ENCODE measurements at regions of chr3 and their contacts with region 1.

Region 1: GRCh38 chr3:185070491-185071286 is 82.2 kb downstream of the C3orf70 start:
- DNase-seq: peak; percentile 21
- H3K4me3 ChIP-seq: no peak overlapping the region
- H3K27ac ChIP-seq: no peak overlapping the region
- H3K4me1 ChIP-seq: no peaks in the 10 kb centered on the region
- H3K27me3 ChIP-seq: no peaks in the 10 kb centered on the region
- CTCF ChIP-seq: peak in 1 of 2 donors; percentile 38

Region 2: GRCh38 chr3:185131602-185132256 is 61.0 kb after region 1 on chr3:
- CTCF ChIA-PET with region 1: no interaction called
- dilution Hi-C with region 1: no loop called
- in situ Hi-C with region 1: no loop called
- intact Hi-C with region 1: loop called (anchors 10 kb)
- DNase-seq: no peak
- H3K4me3 ChIP-seq: no peak overlapping the region
- H3K27ac ChIP-seq: no peak overlapping the region
- H3K4me1 ChIP-seq: no peaks in the 10 kb centered on the region
- H3K27me3 ChIP-seq: peaks cover 3% of the 10 kb centered on the region
- CTCF ChIP-seq: no peak

Measured in mammary epithelial cell (primary cell).